ENCODE measurements at regions of chr2 and their contacts with region 1.

Region 1: DNA sequence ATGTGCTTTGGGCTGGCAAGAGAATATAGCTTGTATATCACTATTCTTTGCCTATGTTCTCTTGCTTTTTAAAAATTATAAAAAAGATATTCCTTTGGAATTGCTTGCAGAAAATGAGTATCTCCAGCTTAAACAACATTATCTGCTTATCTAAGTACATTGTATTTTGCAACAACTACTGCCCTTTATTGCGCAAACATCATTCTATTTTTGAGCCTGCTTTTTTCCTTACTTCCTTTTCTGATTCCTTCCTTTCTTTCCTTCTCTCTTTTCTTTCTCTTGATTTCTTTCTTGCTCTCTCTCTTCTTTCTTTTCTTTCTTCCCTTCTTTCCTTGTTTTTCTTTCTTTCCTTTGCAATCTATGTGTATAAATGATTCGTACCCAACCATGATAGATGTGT is 74.0 kb downstream of the UNC80 start:
- DNase-seq: no peak
- H3K4me3 ChIP-seq: no peak overlapping the region
- H3K27ac ChIP-seq: no peak overlapping the region
- H3K4me1 ChIP-seq: no peaks in the 10 kb centered on the region
- H3K27me3 ChIP-seq: no peaks in the 10 kb centered on the region
- CTCF ChIP-seq: no peak
- POLR2A ChIP-seq: no peak

Region 2: DNA sequence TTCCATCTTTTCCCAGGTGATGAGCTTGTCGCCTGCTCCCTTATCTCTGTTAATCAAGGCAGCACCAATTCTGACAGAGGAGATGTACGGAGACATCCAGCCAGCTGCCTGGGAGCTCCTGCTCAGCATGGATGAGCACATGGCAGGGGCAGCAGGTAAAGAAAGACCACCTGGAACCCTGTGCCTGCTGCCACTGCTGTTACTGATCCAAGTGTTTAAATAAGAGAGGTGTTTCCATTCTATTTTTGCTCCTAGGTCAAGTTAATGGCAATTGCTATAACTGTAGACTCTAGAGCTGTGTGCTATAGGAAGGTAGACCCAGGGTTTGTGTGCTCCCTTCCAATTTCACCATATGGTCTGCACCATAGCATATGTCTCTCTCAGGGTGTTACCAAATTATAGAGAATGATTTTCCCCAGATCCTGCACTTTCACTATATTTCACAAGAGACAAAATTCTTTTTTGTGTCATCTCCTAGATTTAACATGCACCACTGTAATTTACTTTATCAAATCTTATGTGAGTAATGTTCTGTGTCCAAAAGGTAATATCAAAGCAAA is 68.2 kb after region 1 on chr2:
- CTCF ChIA-PET with region 1: no interaction called
- POLR2A ChIA-PET with region 1: no interaction called
- dilution Hi-C with region 1: no loop called
- intact Hi-C with region 1: loop called (anchors 5 kb)
- DNase-seq: no peak
- H3K4me3 ChIP-seq: no peak overlapping the region
- H3K27ac ChIP-seq: no peak overlapping the region
- H3K4me1 ChIP-seq: no peaks in the 10 kb centered on the region
- H3K27me3 ChIP-seq: no peaks in the 10 kb centered on the region
- CTCF ChIP-seq: no peak
- POLR2A ChIP-seq: no peak

Measured in endothelial cell of umbilical vein (primary cell).